ENCODE measurements at regions of chr2 and their contacts with region 1.

Region 1: DNA sequence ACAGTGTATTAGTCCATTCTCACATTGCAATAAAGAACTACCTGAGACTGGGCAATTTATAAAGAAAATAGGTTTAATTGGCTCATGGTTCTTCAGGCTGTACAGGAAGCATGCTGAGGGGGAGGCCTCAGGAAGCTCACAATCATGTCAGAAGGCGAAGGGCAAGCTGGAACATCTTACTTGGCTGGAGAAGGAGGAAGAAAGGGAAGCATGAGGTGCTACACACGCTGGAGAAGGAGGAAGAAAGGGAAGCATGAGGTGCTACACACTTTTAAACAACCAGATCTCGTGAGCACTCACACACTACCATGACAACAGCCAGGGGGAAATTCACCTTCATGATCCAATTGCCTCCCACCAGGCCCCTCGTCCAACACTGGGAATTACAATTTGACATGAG is 95.3 kb upstream of the FAM110C start:
- H3K4me3 ChIP-seq: no peak overlapping the region
- H3K27ac ChIP-seq: no peak overlapping the region
- H3K4me1 ChIP-seq: no peaks in the 10 kb centered on the region
- CTCF ChIP-seq: no peak

Region 2: DNA sequence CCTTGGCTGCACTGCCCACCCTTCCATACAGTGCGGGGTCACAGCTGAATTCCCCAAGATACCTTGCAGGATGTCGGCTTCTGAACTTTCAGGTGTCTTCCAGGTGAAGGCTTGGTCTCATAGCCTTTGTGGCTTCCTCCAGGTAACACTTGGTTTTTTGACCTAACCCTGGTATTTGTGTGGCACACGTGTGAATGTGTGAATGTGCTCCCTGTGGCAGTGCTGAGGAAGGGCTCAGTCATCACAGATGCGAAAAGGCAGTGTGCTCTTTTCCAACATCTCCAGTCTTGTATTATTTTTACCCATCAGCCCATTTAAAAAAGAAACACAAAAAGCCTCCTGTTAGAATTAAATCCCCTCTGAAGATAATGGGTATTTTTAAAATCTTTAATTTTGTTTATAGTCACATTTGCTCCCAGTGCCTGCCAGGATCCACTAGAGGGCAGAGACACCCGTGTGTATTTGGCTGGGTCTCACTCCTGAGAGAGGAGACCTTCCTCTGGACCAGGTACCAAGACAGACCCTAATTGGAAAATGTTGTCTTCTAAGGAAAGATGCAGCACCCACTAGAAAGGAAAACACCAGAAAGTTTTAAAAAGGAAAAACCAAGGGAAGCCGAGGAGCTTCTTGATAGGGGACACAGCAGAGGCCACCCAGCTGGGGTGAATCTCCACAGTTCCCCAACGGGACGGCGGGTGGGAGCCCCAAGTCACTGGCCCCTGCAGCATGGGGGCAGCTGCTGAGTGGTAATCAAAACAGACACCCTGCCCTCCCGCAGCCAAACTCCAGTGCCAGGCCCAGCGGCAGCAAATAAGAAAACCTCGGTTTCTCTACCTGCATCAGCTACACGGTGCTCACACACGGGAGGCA is 123.0 kb before region 1 on chr2:
- CTCF ChIA-PET with region 1: interaction called, 57 read pairs
- POLR2A ChIA-PET with region 1: no interaction called
- H3K4me3 ChIP-seq: no peak overlapping the region
- H3K27ac ChIP-seq: no peak overlapping the region
- H3K4me1 ChIP-seq: no peaks in the 10 kb centered on the region
- CTCF ChIP-seq: no peak